Right ventricle myocardium inferior (tissue), 1 donor: ENCODE measurements at regions of chr3 and their contacts with region 1.

Region 1: GRCh38 chr3:73502609-73503583 is 121.8 kb downstream of the PDZRN3 start:
- DNase-seq: no peak
- ATAC-seq: peak; percentile 33

Region 2: GRCh38 chr3:73459711-73460110 is 43.2 kb before region 1 on chr3:
- intact Hi-C with region 1: loop called (anchors 5 kb)
- DNase-seq: no peak
- ATAC-seq: no peak

Region 3: GRCh38 chr3:73766599-73767381 is 263.9 kb after region 1 on chr3:
- intact Hi-C with region 1: loop called (anchors 10 kb)
- DNase-seq: no peak
- ATAC-seq: peak; percentile 79